Activated CD4-positive, alpha-beta memory T cell treated with anti-CD3 and anti-CD28 coated beads, Interleukin-2, amount 10 ng/mL, durations not matched to agents 7 days and 5 days (primary cell): ENCODE measurements at regions of chr22 and their contacts with region 1.

Region 1: GRCh38 chr22:43273902-43274484 is 69.2 kb downstream of the SCUBE1 start:
- DNase-seq: peak; percentile 54
- H3K4me3 Mint-ChIP-seq: no peak overlapping the region
- H3K27ac Mint-ChIP-seq: no peak overlapping the region
- H3K4me1 Mint-ChIP-seq: peaks cover 16% of the 10 kb centered on the region
- H3K27me3 Mint-ChIP-seq: peaks cover 2% of the 10 kb centered on the region

Region 2: DNA sequence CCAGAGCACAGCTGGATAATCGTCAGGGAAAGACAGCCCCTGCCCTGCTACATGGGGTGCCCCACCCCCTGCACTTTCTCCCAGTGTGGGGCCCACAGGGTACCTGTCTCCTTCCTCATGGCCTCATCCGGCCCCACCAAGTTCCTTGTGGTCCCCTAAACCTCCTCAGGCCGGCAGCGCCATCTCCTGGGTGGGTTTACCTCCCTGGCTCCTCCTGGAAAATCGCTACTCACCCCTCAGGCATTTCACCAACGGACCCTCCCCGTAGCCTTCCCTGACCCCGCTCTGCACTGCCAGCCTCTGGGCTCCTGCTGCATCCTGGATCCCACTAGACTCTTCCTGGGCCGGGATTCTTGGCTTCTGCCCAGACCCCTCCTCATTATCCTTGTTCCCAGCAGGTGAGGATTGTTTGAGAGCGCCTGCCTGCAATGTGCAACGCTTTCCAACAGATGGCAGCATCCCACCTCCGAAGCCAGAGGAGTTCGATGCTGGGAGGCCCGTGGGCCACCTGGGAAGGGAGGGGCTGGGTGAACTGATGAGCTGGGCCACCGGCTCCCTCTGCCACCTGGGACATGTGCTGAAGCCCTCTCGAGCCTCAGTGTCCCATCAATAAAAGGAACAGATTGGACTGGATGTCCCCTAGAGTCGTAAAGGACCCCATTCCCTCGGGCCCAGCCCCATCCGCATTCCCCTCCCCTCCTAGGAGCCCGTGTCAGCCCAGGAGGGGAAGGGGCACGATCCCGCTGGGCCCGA is 42.8 kb before region 1 on chr22:
- CTCF ChIA-PET with region 1: interaction called, 16 read pairs
- POLR2A ChIA-PET with region 1: no interaction called
- DNase-seq: peak; percentile 73
- H3K4me3 Mint-ChIP-seq: no peak overlapping the region
- H3K27ac Mint-ChIP-seq: no peak overlapping the region
- H3K4me1 Mint-ChIP-seq: peaks cover 4% of the 10 kb centered on the region
- H3K27me3 Mint-ChIP-seq: peaks cover 3% of the 10 kb centered on the region

Region 3: GRCh38 chr22:43263645-43264514 is 10.1 kb before region 1 on chr22:
- CTCF ChIA-PET with region 1: interaction called, 16 read pairs
- POLR2A ChIA-PET with region 1: interaction called, 6 read pairs
- DNase-seq: peak; percentile 90
- H3K4me3 Mint-ChIP-seq: peak overlapping the region; percentile 63
- H3K27ac Mint-ChIP-seq: peak overlapping the region; percentile 85
- H3K4me1 Mint-ChIP-seq: peaks cover 32% of the 10 kb centered on the region
- H3K27me3 Mint-ChIP-seq: peaks cover 9% of the 10 kb centered on the region

Region 4: GRCh38 chr22:43385770-43386641 is 112.0 kb after region 1 on chr22:
- CTCF ChIA-PET with region 1: interaction called, 67 read pairs
- POLR2A ChIA-PET with region 1: no interaction called
- DNase-seq: peak; percentile 77
- H3K4me3 Mint-ChIP-seq: no peak overlapping the region
- H3K27ac Mint-ChIP-seq: no peak overlapping the region
- H3K4me1 Mint-ChIP-seq: peaks cover 10% of the 10 kb centered on the region
- H3K27me3 Mint-ChIP-seq: peaks cover 42% of the 10 kb centered on the region